GM10248 (cell line): ENCODE measurements at regions of chr1 and their contacts with region 1.

Region 1: DNA sequence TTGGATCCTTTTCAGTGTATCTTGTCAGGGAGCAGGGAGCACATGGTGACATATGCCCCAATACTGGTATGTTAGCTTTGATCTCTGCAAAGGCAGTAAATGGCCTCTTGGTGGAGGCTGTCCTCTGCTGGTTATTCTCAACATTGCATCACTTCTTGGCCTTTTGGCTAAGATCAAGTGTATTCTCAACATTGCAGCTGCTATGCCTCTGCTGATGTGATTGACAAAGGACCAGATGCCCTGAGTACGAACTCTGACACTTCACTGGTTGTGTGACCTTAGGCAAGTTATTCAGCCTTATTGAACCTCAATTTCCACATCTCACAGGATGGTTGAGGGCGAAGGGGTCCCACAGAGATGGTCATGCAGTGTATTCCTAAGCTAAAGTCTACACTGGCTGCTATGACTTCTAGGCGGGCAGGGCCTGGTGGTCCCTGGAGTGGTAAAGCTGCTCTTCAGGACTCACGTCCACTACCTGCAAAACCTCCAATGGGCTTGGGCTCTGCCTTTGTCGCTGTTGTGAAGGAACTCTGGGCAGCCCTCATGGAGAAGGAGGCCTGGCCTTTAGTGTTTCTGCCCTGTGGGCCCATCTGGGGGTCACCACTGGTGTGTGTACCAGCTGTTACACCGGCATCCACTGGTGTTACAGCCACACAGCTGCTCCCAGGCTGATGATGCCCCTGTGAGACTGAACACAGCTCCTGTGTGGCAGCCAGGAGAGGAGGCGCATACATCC is 64.8 kb downstream of the DNTTIP2 start:
- DNase-seq: peak; percentile 61
- CTCF ChIP-seq: peak; percentile 94

Region 2: GRCh38 chr1:93275634-93276295 is 538.5 kb before region 1 on chr1:
- CTCF ChIA-PET with region 1: no interaction called
- POLR2A ChIA-PET with region 1: no interaction called
- DNase-seq: no peak
- CTCF ChIP-seq: no peak

Region 3: DNA sequence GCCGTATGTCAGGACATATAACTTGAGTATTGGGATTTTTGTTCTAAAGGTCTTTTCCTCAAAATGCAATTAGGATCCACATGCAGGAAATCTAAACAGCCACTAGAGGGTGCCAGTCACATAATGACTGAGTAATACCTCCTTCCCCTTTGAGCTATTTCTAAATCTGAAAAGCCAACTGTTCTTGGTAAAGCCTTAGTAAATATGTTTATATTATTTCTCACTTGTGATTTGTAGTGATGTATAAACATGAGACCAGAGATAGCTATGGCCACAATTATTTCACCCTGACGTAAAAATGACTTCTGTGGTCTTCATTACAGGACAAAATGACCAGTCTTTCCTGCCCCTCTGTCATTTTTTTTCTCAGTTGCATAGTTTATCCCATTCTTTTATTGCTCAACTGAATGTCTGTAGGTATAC is 509.5 kb before region 1 on chr1:
- CTCF ChIA-PET with region 1: interaction called, 16 read pairs
- POLR2A ChIA-PET with region 1: no interaction called
- DNase-seq: peak; percentile 45
- CTCF ChIP-seq: peak; percentile 82

Region 4: GRCh38 chr1:93649231-93649630 is 165.0 kb before region 1 on chr1:
- CTCF ChIA-PET with region 1: interaction called, 27 read pairs
- POLR2A ChIA-PET with region 1: no interaction called
- DNase-seq: no peak
- CTCF ChIP-seq: no peak

Region 5: GRCh38 chr1:93686497-93687250 is 127.6 kb before region 1 on chr1:
- CTCF ChIA-PET with region 1: interaction called, 19 read pairs
- POLR2A ChIA-PET with region 1: no interaction called
- DNase-seq: no peak
- CTCF ChIP-seq: no peak

Region 6: DNA sequence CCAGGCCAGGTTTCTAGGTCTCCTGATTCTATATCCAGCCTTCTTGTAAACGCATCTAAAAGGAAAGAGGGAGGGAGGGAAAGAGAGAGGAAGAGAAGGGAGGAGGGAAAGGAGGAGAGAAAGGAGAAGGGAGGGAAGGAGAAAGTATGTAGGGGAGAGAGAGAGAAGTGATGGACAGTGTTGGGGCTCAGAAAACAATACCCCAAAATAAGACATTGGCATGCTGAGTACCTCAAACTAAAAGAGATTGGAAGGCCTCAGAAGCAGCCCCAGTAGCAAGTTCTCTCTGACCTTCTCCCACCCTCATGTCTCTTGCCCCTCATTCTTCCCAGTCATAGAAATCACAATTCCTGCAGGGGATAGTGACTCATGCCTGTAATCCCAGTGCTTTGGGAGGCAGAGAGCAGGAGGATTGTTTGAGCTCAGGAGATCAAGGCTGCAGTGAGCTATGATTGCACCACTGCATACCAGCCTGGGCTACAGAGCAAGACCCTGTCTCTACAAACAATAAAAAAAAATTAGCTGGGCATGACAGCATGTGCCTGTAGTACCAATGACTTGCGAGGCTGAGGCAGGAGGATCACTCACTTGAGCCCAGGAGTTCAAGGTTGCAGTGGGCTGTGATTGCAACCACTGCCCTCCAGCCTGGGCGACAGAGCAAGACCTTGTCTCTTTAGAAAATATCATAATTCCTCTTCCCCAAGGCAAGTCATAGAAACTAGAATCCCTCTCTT is 13.6 kb after region 1 on chr1:
- CTCF ChIA-PET with region 1: interaction called, 68 read pairs
- POLR2A ChIA-PET with region 1: no interaction called
- DNase-seq: no peak
- CTCF ChIP-seq: no peak

Region 7: DNA sequence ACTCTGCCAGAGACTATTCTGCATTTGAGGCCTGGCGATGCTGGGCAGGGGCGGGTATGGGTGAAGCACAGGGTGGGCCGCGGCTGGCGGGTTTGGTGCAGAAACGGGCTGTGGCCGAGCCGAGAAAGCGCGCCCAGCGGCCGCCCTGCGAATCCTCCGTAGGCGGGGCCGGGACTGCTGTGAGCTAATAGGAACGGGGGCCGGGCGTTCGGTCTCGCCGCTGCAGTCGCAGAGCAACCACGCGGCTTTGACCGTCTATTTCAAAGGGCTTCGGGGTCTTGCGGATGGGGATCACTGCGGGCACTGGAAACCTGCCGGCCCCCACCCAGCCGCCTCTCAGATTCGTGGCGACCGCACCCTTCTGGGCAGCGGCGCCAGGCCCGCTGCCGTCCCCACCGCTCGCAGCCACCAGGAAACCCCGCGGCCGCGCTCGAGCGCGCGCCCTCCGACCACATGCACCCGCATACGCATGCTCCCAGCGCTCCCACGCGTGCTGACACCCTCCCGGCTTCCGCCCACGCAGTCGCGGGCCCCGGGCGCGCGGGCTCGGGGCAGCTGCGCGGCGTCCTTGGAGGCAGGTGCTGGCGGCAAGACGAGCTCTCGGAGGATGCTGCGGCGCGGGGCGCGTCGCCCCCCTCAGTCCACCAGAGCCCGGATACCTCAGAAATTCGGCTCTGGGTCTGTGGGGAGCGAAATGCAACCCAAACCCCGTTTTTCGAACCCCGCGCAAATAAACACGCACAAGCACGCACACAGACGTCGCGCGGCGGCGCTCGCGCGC is 32.2 kb after region 1 on chr1:
- CTCF ChIA-PET with region 1: interaction called, 64 read pairs
- POLR2A ChIA-PET with region 1: no interaction called
- DNase-seq: peak; percentile 87
- CTCF ChIP-seq: peak; percentile 28